CD4-positive, alpha-beta memory T cell (primary cell): ENCODE measurements at regions of chr4 and their contacts with region 1.

Region 1: DNA sequence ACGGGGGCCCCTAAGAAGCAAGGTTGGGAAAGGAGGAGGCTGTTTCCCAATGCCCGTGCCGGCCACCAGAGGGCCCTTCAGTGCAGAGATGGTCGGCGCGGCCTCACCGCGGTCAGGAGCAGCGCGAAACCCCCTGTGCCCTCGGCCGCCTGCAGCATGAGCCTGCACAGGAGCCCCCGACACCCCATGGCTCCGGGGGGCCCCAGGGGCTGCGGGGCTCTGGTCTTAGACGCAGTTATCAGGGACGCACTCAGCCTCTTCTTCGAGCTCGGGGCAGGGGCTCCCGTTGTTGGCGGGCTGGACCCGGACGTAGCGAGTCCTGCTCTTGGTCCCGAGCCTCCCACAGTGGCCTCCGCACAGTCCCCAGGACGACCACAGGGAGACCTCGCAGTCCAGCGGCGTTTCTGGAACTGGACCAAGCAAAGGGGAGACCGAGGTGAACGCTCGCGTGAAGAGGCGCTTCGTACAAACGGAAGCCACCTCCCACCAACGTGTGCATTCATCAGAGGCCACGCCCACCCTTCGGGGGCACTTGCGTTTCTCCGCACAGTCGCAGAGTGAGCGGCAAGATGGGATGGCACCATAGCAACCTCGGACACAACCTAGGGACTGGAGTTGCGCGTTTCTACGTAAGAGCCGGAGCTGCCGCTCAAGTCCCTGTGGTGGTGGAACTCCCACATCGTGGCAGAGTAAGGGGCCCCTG is 5.0 kb downstream of the SPON2 start:
- DNase-seq: peak; percentile 81 to 91 (median 84)
- H3K4me3 ChIP-seq: peak overlapping the region; percentile 47 to 78
- H3K4me3 Mint-ChIP-seq: peak overlapping the region; percentile 83 to 90 (median 87)
- H3K27ac ChIP-seq: peak overlapping the region; percentile 72
- H3K27ac Mint-ChIP-seq: peak overlapping the region; percentile 51 to 92 (median 87)
- H3K4me1 ChIP-seq: peaks cover 25% of the 10 kb centered on the region
- H3K4me1 Mint-ChIP-seq: peaks cover 9 to 24% (median 16%) of the 10 kb centered on the region in 4 donors
- H3K27me3 ChIP-seq: peaks cover 9% of the 10 kb centered on the region
- H3K27me3 Mint-ChIP-seq: peaks cover 0 to 5% of the 10 kb centered on the region in 2 donors

Region 2: GRCh38 chr4:1026115-1026514 is 141.3 kb before region 1 on chr4:
- CTCF ChIA-PET with region 1: no interaction called
- POLR2A ChIA-PET with region 1: no interaction called
- intact Hi-C with region 1: no loop called
- DNase-seq: peak in 4 of 5 donors; percentile 21 to 61 (median 34)
- H3K4me3 ChIP-seq: no peak overlapping the region
- H3K4me3 Mint-ChIP-seq: no peak overlapping the region
- H3K27ac ChIP-seq: no peak overlapping the region
- H3K27ac Mint-ChIP-seq: peak overlapping the region in 6 of 7 donors; percentile 4 to 90 (median 58)
- H3K4me1 ChIP-seq: peaks cover 8% of the 10 kb centered on the region
- H3K4me1 Mint-ChIP-seq: peaks cover 9 to 13% (median 11%) of the 10 kb centered on the region in 4 donors
- H3K27me3 ChIP-seq: no peaks in the 10 kb centered on the region
- H3K27me3 Mint-ChIP-seq: no peaks in the 10 kb centered on the region

Region 3: DNA sequence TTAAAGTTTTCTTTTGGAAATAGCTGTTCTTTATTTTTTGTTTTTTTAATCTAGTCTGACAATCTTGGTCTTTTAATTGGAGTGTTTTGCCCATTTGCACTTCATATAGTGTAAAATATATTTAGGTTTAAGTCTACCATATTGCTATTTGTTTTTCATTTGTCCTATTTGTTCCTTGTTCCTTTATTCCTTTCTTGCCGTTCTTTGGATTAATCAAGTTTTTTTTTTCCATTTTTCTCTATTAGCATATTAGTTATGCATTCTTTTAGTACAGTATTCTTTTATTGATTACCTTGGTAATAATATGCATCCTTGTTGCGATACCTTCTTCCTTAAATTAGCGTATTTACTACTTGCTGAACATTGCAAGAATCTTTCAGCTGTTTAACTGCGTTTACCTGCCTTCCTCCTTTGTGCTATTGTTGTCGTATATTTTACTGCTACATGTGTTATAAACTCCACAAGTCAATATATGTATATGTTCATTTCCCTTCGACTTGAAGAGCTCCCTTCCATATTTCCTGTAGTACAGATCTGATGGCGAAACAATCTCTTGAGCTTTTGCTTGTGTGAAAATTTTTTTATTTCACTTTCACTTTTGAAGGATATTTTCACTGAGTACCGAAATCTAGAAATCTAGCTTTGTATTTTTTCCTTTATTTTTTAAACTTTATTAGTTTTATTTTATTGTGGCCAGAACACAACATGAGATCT is 30.2 kb before region 1 on chr4:
- CTCF ChIA-PET with region 1: interaction called, 16 read pairs
- POLR2A ChIA-PET with region 1: no interaction called
- intact Hi-C with region 1: no loop called
- DNase-seq: peak in 4 of 5 donors; percentile 5 to 16 (median 9)
- H3K4me3 ChIP-seq: peak overlapping the region in 1 of 2 donors; percentile 23
- H3K4me3 Mint-ChIP-seq: peak overlapping the region; percentile 69 to 87 (median 82)
- H3K27ac ChIP-seq: no peak overlapping the region
- H3K27ac Mint-ChIP-seq: peak overlapping the region in 4 of 7 donors; percentile 11 to 55 (median 46)
- H3K4me1 ChIP-seq: peaks cover 11% of the 10 kb centered on the region
- H3K4me1 Mint-ChIP-seq: peaks cover 9 to 17% (median 12%) of the 10 kb centered on the region in 4 donors
- H3K27me3 ChIP-seq: no peaks in the 10 kb centered on the region
- H3K27me3 Mint-ChIP-seq: peaks cover 0 to 3% of the 10 kb centered on the region in 2 donors

Region 4: DNA sequence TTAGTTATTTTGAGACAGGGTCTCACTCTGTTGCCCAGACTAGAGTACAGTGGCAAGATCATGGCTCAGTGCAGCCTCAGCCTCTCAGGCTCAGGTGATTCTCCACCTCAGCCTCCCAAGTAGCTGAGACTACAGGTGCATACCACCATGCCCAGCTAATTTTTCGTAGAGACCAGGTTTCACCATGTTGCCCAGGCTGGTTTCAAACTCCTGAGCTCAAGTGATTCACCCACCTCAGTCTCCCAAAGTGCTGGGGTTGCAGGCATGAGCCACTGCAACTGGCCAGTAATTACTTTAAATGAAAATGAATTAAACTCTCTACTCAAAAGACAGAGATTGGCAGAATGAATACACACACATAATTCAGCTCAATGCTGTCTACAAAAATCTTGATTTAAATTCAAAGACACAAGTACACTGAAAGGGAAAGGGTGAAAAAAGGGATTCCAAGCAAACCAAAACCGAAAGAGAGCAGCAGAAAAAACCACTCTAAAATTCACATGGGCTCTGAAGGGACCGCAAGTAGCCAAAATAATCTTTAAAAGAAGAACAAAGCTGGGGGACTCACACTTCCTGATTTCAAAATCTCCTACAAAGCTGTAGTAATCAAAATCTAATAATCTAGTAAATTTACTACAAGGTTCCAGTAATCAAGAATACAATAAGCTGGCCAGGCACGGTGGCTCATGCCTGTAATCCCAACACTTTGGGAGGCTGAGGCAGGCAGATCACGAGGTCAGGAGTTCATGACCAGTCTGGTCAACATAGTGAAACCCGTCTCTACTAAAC is 16.8 kb after region 1 on chr4:
- CTCF ChIA-PET with region 1: interaction called, 13 read pairs
- POLR2A ChIA-PET with region 1: interaction called, 3 read pairs
- intact Hi-C with region 1: no loop called
- DNase-seq: no peak
- H3K4me3 ChIP-seq: no peak overlapping the region
- H3K4me3 Mint-ChIP-seq: peak overlapping the region in 7 of 8 donors; percentile 7 to 73 (median 64)
- H3K27ac ChIP-seq: no peak overlapping the region
- H3K27ac Mint-ChIP-seq: peak overlapping the region in 5 of 7 donors; percentile 2 to 74 (median 59)
- H3K4me1 ChIP-seq: peaks cover 22% of the 10 kb centered on the region
- H3K4me1 Mint-ChIP-seq: peaks cover 14 to 23% (median 16%) of the 10 kb centered on the region in 4 donors
- H3K27me3 ChIP-seq: no peaks in the 10 kb centered on the region
- H3K27me3 Mint-ChIP-seq: peaks cover 0 to 4% of the 10 kb centered on the region in 2 donors

Region 5: DNA sequence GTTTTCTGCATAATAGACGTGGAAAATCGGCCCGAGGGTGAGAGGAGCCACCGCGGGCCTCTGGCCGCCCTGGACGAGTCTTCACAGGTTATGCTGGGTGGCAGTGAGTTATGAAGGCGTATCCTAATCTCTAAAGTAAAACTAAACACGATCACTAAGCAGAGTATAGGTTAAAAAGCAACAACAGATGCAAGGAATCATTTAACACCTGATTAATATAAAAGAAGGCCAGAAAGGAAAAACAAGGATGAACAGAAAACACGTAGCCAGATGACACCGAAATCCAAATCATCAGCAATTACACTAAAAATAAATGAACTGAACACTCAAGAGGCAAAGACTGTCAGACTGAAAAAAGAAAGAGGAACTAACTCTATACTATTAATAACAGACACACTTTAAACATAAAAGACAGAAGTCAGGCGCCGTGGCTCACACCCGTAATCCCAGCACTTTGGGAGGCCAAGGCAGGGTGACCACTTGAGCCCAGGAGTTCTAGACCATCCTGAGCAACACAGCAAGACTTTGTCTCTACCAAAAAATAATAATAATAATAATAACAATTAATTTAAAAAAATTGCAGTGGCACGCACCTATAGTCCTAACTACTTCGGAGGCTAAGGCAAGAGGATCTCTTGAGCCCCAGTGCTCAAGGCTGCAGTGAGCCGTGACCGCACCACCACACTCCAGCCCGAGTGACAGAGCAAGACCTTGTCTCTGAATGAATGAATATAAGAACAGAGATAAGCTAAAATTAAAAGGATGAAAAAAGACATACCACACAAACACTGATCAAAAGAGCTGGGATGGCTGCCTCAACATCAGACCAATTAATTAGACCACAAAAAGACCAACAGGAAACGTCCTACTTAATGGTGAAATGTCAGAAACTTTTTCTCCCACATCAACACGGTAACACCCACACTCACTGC is 51.5 kb after region 1 on chr4:
- CTCF ChIA-PET with region 1: interaction called, 5 read pairs
- POLR2A ChIA-PET with region 1: no interaction called
- intact Hi-C with region 1: loop called (anchors 1 kb)
- DNase-seq: no peak
- H3K4me3 ChIP-seq: no peak overlapping the region
- H3K4me3 Mint-ChIP-seq: peak overlapping the region in 6 of 8 donors; percentile 21 to 56 (median 42)
- H3K27ac ChIP-seq: no peak overlapping the region
- H3K27ac Mint-ChIP-seq: peak overlapping the region; percentile 7 to 86 (median 58)
- H3K4me1 ChIP-seq: peaks cover 40% of the 10 kb centered on the region
- H3K4me1 Mint-ChIP-seq: peaks cover 25 to 58% (median 37%) of the 10 kb centered on the region in 4 donors
- H3K27me3 ChIP-seq: no peaks in the 10 kb centered on the region
- H3K27me3 Mint-ChIP-seq: no peaks in the 10 kb centered on the region

Region 6: GRCh38 chr4:1266881-1267763 is 99.7 kb after region 1 on chr4:
- CTCF ChIA-PET with region 1: interaction called, 109 read pairs
- POLR2A ChIA-PET with region 1: interaction called, 18 read pairs
- intact Hi-C with region 1: loop called (anchors 1 kb)
- DNase-seq: peak in 2 of 5 donors; percentile 25 to 36
- H3K4me3 ChIP-seq: peak overlapping the region in 1 of 2 donors; percentile 62
- H3K4me3 Mint-ChIP-seq: peak overlapping the region; percentile 75 to 90 (median 88)
- H3K27ac ChIP-seq: peak overlapping the region; percentile 63
- H3K27ac Mint-ChIP-seq: peak overlapping the region; percentile 94 to 100 (median 95)
- H3K4me1 ChIP-seq: peaks cover 12% of the 10 kb centered on the region
- H3K4me1 Mint-ChIP-seq: peaks cover 9 to 19% (median 12%) of the 10 kb centered on the region in 4 donors
- H3K27me3 ChIP-seq: no peaks in the 10 kb centered on the region
- H3K27me3 Mint-ChIP-seq: no peaks in the 10 kb centered on the region